PC-3 (cell line): ENCODE measurements at regions of chr2 and their contacts with region 1.

Region 1: GRCh38 chr2:241315093-241315878 is at the start of gene HDLBP:
- DNase-seq: peak; percentile 97
- ATAC-seq: peak; percentile 87
- H3K4me3 ChIP-seq: peak within 1 kb of the TSS; percentile 98
- H3K27ac ChIP-seq: peak within 1 kb of the TSS; percentile 97
- H3K4me1 ChIP-seq: peaks cover 51% of the 10 kb centered on the region
- H3K27me3 ChIP-seq: no peaks in the 10 kb centered on the region
- CTCF ChIP-seq: peak; percentile 58
- total RNA-seq, gene HDLBP: 410 and 505 TPM in 2 replicates

Region 2: GRCh38 chr2:241271641-241272297 is 43.5 kb before region 1 on chr2:
- CTCF ChIA-PET with region 1: interaction called, 3 read pairs
- POLR2A ChIA-PET with region 1: interaction called, 5 read pairs
- intact Hi-C with region 1: loop called (anchors 2 kb)
- DNase-seq: peak; percentile 77
- ATAC-seq: peak; percentile 79
- H3K4me3 ChIP-seq: peak overlapping the region; percentile 83
- H3K27ac ChIP-seq: peak overlapping the region; percentile 49
- H3K4me1 ChIP-seq: peaks cover 25% of the 10 kb centered on the region
- H3K27me3 ChIP-seq: no peaks in the 10 kb centered on the region
- CTCF ChIP-seq: no peak